H1 (cell line): ENCODE measurements at regions of chr19 and their contacts with region 1.

Region 1: DNA sequence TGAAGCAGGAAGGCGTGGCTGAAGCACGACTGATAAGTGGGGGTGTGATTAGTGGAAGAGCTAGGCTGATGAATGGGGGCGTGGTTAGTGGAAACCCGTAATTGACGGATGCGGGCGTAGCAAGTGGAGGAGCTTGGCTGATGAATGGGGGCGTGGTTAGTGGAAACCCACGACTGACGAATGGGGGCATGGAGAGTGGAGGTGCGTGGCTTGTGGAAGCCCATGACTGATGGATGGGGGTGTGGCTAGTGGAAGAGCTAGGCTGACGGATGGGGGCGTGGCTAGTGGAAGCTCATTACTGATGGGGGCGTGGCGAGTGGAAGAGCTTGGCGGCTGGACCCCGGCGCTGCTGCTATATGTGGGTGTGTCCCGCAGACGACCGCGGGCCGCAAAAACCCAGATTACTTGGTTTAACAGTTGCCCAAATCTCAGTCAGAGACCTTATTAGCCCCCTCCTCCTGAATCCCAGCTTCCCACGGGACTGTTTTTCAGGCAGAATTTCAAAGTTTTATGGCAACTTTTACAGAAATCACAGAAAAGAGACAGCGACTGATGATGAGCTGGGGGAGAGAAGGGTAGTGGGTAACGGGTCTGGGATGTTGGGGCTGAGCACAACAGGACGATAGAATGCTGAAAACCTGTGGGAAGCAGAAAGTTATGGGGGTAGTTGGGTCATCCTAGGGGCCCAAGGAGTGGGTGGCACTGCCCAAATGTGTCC is 9.0 kb upstream of the MEIS3 start:
- DNase-seq: peak; percentile 96 to 100
- H3K4me3 ChIP-seq: peak overlapping the region; percentile 31 to 61 (median 42); a peak in 7 of 8 replicates
- H3K27ac ChIP-seq: no peak overlapping the region
- H3K4me1 ChIP-seq: peaks cover 0 to 23% (median 12%) of the 10 kb centered on the region in 4 experiments; a peak in 5 of 7 replicates
- H3K27me3 ChIP-seq: peaks cover 5 to 33% (median 29%) of the 10 kb centered on the region in 4 experiments
- CTCF ChIP-seq: no peak
- EP300 ChIP-seq: no peak
- POLR2A ChIP-seq: no peak
- RAD21 ChIP-seq: no peak

Region 2: DNA sequence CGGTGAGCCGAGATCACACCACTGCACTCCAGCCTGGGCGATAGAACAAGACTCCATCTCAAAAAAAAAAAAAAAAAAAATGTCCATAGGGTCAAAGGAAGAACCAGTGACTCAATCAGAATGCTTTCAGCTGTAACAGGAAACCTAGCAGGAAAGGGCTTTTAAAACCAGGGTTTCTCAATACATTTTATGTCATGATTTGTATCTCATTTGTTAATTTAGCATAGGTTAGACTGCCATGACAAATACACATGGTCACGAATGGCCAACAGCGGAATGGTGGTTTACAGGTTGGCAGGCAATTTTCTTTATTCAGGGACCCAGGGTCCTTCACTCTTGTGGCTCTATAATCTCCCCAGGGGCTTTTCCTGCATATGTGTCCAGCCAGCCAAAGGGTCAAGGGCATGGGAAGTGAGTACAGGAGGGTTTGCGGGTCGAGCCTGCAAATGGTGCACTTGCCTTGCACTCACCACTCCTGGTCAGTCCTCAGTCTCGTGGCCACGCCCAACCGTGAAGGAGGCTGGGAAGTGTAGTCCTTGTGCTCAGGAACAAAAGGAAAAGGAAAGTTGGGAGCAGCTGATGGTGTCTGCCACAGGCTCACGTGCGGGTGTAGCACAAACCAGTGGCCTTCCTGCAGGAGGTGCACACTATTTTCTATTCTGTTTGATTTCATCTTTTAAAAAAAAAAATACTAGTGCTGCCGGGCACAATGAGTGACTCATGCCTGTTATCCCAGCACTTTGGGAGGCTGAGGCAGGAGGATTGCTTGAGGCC is 64.4 kb before region 1 on chr19:
- CTCF ChIA-PET with region 1: no interaction called
- POLR2A ChIA-PET with region 1: no interaction called
- DNase-seq: no peak
- H3K4me3 ChIP-seq: no peak overlapping the region
- H3K27ac ChIP-seq: no peak overlapping the region
- H3K4me1 ChIP-seq: no peaks in the 10 kb centered on the region
- H3K27me3 ChIP-seq: no peaks in the 10 kb centered on the region
- CTCF ChIP-seq: no peak
- EP300 ChIP-seq: no peak
- POLR2A ChIP-seq: no peak
- RAD21 ChIP-seq: no peak

Region 3: GRCh38 chr19:47391510-47392223 is 36.7 kb before region 1 on chr19:
- CTCF ChIA-PET with region 1: interaction called, 17 read pairs
- POLR2A ChIA-PET with region 1: interaction called, 4 read pairs
- DNase-seq: peak; percentile 89 to 97
- H3K4me3 ChIP-seq: no peak overlapping the region
- H3K27ac ChIP-seq: no peak overlapping the region
- H3K4me1 ChIP-seq: peaks cover 0 to 3% (median 0%) of the 10 kb centered on the region in 4 experiments; a peak in 4 of 7 replicates
- H3K27me3 ChIP-seq: no peaks in the 10 kb centered on the region
- CTCF ChIP-seq: peak; percentile 71 to 92 (median 76)
- EP300 ChIP-seq: peak in 1 of 2 experiments; percentile 90; a peak in 2 of 3 replicates
- POLR2A ChIP-seq: peak in 1 of 2 experiments; percentile 54; a peak in 2 of 3 replicates
- RAD21 ChIP-seq: peak; percentile 65 to 68

Region 4: DNA sequence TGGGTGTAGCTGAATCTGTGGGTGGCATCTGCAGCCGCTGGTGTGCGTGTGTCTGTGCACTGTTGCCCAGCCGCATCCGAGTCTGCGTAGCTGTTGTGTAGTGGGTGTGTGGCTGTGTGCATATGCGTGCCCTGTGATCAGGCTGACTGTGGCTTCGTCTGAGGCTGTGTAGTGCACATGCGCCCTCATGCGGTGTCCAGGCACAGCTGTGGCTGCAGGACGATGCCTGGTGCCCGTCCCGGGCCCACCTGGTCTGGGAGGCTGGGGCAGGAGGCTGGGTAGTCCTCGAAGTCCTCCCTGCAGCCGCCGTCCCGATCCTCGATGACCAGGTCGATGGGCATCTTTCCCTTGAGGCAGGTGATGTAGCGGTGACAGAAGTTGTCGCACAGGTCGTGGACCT is 13.9 kb before region 1 on chr19:
- CTCF ChIA-PET with region 1: interaction called, 30 read pairs
- POLR2A ChIA-PET with region 1: interaction called, 7 read pairs
- DNase-seq: peak in 1 of 2 experiments; percentile 70
- H3K4me3 ChIP-seq: no peak overlapping the region
- H3K27ac ChIP-seq: no peak overlapping the region
- H3K4me1 ChIP-seq: peaks cover 6 to 18% (median 10%) of the 10 kb centered on the region in 4 experiments
- H3K27me3 ChIP-seq: peaks cover 12 to 35% (median 32%) of the 10 kb centered on the region in 4 experiments
- CTCF ChIP-seq: peak; percentile 70 to 86 (median 79)
- EP300 ChIP-seq: no peak
- POLR2A ChIP-seq: no peak
- RAD21 ChIP-seq: peak; percentile 78 to 85

Region 5: DNA sequence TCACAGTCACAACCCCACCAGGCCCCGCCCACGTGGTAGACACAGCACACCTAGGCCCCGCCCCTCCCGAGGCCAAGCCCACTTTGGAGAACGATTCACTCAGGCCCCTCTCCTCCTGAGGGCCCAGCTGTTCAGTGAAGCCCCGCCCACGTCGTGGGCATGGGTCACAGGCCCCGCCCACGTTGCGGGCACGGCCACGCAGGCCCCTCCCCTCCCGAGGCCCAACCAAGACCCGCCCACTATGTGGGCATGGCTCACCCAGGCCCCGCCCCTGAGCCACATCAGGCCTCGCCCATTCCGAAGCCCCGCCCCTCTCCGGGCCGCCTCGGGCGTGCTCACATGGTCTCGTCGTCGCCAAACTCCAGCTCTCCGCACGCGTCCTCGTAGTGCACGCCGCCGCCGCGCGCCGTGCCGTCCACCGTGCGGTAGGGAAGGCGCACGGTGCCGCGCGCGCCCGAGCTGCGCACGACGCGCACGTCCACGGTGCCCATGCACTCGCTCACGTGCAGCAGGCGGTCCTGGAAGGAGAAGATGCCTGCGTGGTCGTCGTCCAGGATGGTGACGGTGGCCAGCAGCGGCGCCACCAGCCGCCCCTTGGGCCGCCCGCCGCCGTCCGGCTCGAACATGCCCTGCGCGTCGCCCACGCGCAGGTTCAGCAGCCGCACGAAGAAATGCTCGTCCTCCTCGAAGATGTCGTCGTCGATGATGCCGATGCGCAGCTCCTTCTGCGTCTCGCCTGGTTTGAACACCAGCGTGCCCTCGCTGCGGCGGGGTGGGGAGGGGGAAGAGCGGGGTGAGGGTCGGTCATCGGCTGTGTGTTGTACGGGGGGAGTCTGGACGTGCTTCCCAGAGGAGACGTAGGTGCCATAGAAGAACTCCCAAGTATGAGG is 19.4 kb after region 1 on chr19:
- CTCF ChIA-PET with region 1: interaction called, 7 read pairs
- POLR2A ChIA-PET with region 1: interaction called, 12 read pairs
- DNase-seq: peak; percentile 95 to 100
- H3K4me3 ChIP-seq: peak overlapping the region; percentile 56 to 79 (median 70)
- H3K27ac ChIP-seq: peak overlapping the region; percentile 56; the same call in 1 of the 2 replicates
- H3K4me1 ChIP-seq: peaks cover 7 to 18% (median 11%) of the 10 kb centered on the region in 4 experiments
- H3K27me3 ChIP-seq: peaks cover 0 to 9% (median 9%) of the 10 kb centered on the region in 4 experiments; a peak in 5 of 7 replicates
- CTCF ChIP-seq: peak in 1 of 3 experiments; percentile 0; a peak in 1 of 4 replicates
- EP300 ChIP-seq: no peak
- POLR2A ChIP-seq: no peak
- RAD21 ChIP-seq: no peak